ENCODE measurements at regions of chr9 and their contacts with region 1.

Region 1: GRCh38 chr9:100525563-100525962 is 52.3 kb upstream of the CAVIN4 start:
- DNase-seq: no peak
- H3K4me3 ChIP-seq: no peak overlapping the region
- H3K27ac ChIP-seq: no peak overlapping the region
- H3K4me1 ChIP-seq: no peaks in the 10 kb centered on the region
- H3K27me3 ChIP-seq: no peaks in the 10 kb centered on the region
- CTCF ChIP-seq: no peak

Region 2: GRCh38 chr9:100020121-100020795 is 505.3 kb before region 1 on chr9:
- CTCF ChIA-PET with region 1: no interaction called
- POLR2A ChIA-PET with region 1: interaction called, 11 read pairs
- intact Hi-C with region 1: no loop called
- DNase-seq: no peak
- H3K4me3 ChIP-seq: no peak overlapping the region
- H3K27ac ChIP-seq: no peak overlapping the region
- H3K4me1 ChIP-seq: no peaks in the 10 kb centered on the region
- H3K27me3 ChIP-seq: no peaks in the 10 kb centered on the region
- CTCF ChIP-seq: no peak

Region 3: GRCh38 chr9:100379862-100380261 is 145.7 kb before region 1 on chr9:
- CTCF ChIA-PET with region 1: no interaction called
- POLR2A ChIA-PET with region 1: no interaction called
- intact Hi-C with region 1: no loop called
- DNase-seq: peak in 1 of 2 experiments; percentile 12
- H3K4me3 ChIP-seq: no peak overlapping the region
- H3K27ac ChIP-seq: peak overlapping the region; percentile 53
- H3K4me1 ChIP-seq: peaks cover 9% of the 10 kb centered on the region; the same call in 1 of the 2 replicates
- H3K27me3 ChIP-seq: no peaks in the 10 kb centered on the region
- CTCF ChIP-seq: no peak

Region 4: GRCh38 chr9:100492952-100493351 is 32.6 kb before region 1 on chr9:
- CTCF ChIA-PET with region 1: no interaction called
- POLR2A ChIA-PET with region 1: interaction called, 27 read pairs
- intact Hi-C with region 1: no loop called
- DNase-seq: no peak
- H3K4me3 ChIP-seq: no peak overlapping the region
- H3K27ac ChIP-seq: no peak overlapping the region
- H3K4me1 ChIP-seq: no peaks in the 10 kb centered on the region
- H3K27me3 ChIP-seq: no peaks in the 10 kb centered on the region
- CTCF ChIP-seq: no peak